AG04450 (cell line): ENCODE measurements at regions of chr10 and their contacts with region 1.

Region 1: GRCh38 chr10:5629303-5630111 is 36.9 kb downstream of the ASB13 start:
- DNase-seq: peak; percentile 90
- H3K4me3 ChIP-seq: no peak overlapping the region
- H3K27ac ChIP-seq: peak overlapping the region; percentile 52
- H3K27me3 ChIP-seq: no peaks in the 10 kb centered on the region
- CTCF ChIP-seq: peak; percentile 98

Region 2: DNA sequence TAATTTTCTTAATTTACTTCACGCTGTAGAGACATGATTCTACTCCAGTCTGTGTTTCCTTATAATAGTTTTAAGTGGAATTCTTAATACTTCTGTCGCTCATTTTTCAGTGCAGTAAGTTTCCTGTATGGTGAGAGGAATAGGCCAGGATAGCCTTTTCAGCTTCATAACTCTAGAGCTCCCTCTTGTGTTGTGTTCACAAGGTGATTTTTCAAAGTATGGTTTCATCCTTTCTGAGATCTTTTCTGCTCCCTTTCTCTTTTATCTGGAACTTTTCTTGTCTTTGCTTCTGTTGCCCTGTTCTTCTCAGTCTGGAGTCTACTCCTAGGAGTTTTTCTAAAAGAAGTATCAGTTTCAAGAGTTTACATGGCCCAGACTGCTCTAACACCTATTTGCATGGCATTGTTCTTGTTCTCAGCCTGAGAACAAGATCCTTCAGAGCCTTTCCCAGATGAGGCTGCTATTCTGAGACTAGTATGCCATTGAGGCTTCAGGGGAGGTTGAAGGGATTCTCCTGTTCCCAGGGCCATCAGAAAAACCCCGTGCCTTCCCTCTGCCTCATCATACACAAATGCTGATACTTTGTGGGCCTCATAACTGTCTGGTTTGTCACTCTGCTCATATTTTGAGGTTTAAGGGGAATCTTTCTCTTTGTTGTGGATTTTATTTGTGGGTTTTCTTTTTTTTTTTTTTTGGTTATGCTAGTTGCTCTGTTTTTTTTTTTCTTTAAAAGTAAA is 195.3 kb before region 1 on chr10:
- CTCF ChIA-PET with region 1: interaction called, 309 read pairs
- POLR2A ChIA-PET with region 1: no interaction called
- DNase-seq: no peak
- H3K4me3 ChIP-seq: no peak overlapping the region
- H3K27ac ChIP-seq: peak overlapping the region; percentile 48
- H3K27me3 ChIP-seq: no peaks in the 10 kb centered on the region
- CTCF ChIP-seq: peak; percentile 77

Region 3: GRCh38 chr10:5666008-5666829 is 36.7 kb after region 1 on chr10 and contains the start of gene ASB13:
- CTCF ChIA-PET with region 1: interaction called, 10 read pairs
- POLR2A ChIA-PET with region 1: no interaction called
- DNase-seq: no peak
- H3K4me3 ChIP-seq: peak within 1 kb of the TSS; percentile 79
- H3K27ac ChIP-seq: no peak within 1 kb of the TSS
- H3K27me3 ChIP-seq: peaks cover 15% of the 10 kb centered on the region
- CTCF ChIP-seq: no peak
- polyA plus RNA-seq, gene ASB13: 4.0 and 4.3 TPM in 2 replicates

Region 4: DNA sequence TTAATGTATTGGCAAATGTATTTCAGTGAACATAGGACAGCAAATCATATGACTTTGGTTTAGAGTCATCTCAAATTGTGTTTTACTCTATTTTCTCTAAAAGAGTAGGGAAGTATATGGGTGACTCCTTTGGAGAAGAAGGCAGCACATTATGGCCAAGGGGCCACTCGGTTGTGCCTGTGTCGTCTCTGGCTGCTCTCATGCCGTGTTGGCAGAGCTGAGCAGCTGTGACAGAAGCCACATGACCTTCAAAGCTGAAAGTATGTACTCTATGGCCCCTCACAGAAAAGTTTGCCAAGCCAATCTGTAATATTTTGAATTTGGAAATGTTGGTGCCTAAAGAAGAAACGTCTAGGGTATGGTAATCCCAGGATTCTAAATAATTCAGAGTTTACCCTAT is 102.6 kb after region 1 on chr10:
- CTCF ChIA-PET with region 1: no interaction called
- POLR2A ChIA-PET with region 1: no interaction called
- DNase-seq: no peak
- H3K4me3 ChIP-seq: no peak overlapping the region
- H3K27ac ChIP-seq: no peak overlapping the region
- H3K27me3 ChIP-seq: no peaks in the 10 kb centered on the region
- CTCF ChIP-seq: no peak

Region 5: GRCh38 chr10:5805711-5806110 is 176.2 kb after region 1 on chr10:
- CTCF ChIA-PET with region 1: interaction called, 11 read pairs
- POLR2A ChIA-PET with region 1: no interaction called
- DNase-seq: no peak
- H3K4me3 ChIP-seq: no peak overlapping the region
- H3K27ac ChIP-seq: no peak overlapping the region
- H3K27me3 ChIP-seq: no peaks in the 10 kb centered on the region
- CTCF ChIP-seq: no peak

Region 6: DNA sequence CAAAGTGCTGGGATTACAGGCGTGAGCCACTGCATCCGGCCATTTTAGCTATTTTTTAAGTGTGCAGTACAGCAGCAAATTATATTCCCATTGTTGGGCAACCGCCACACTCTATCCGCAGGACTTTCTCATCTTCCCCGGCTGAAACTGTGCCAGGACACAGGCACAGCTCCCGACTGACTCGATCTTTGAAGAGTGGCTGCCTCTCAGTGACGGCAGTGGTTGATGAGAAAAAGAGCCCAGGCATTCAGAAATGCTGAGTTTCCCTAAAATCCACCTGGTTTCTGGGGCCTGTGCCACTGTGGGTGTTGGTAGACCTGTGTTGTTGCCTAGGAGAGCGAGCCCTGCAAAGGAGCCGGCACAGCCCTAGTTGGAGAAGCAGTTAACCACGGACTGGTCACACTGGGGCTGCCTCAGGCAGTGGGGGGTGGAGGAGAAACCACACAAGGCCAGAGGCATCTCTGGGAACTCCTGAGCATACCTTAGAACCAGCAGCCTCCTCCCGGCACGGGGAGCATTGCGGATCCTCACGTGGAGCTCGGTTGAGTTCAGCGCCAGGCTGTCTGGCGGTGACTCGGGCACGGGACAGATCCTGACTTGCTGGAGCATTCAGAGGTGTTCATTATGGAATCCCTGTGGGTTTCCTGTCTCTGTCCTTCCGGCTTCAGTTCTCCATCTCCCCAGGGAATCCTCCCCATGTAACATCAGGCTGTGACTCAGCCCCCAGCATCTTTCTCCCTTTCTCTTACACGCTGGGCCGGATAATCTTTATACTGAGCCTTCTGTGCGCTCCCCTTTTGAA is 589.4 kb after region 1 on chr10:
- CTCF ChIA-PET with region 1: no interaction called
- POLR2A ChIA-PET with region 1: no interaction called
- DNase-seq: no peak
- H3K4me3 ChIP-seq: no peak overlapping the region
- H3K27ac ChIP-seq: no peak overlapping the region
- H3K27me3 ChIP-seq: no peaks in the 10 kb centered on the region
- CTCF ChIP-seq: no peak